GM10248 (cell line): ENCODE measurements at regions of chr2 and their contacts with region 1.

Region 1: DNA sequence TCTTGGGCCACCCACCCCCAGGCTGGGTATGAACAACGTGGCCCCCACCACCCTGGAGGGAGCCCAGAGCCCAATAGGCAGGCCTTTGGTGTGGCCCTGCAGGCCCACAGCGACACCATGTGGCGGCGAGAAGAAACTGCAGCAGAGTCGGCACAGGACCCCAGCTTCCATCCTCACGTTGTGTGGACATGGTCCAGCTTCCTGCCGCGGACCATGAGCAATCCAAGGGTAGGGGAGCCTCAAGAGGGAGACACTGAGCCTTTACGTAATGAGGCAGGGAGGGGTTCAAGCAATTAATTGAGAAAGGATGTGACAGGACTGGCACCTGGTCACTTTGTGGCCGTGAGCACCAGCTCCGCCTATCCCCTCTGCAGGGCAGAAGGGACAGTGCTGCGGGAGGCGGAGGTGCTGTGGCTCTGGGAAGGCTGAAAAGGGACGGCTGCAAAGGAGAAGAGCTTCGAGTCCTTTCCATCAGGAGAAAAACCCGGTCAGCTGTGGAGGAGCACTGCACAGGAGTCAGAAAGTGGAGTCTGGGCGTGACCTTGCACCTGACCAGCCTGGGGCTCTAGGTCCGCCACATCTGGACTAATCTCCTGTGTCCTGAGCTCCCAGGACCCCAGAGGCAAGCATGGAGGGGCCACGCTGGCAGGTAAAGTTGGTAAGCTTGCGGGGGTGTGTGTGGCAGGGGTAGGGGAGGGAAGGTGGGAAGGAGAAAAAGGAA is 44.8 kb downstream of the TMEM37 start:
- DNase-seq: peak; percentile 86
- CTCF ChIP-seq: peak; percentile 94

Region 2: DNA sequence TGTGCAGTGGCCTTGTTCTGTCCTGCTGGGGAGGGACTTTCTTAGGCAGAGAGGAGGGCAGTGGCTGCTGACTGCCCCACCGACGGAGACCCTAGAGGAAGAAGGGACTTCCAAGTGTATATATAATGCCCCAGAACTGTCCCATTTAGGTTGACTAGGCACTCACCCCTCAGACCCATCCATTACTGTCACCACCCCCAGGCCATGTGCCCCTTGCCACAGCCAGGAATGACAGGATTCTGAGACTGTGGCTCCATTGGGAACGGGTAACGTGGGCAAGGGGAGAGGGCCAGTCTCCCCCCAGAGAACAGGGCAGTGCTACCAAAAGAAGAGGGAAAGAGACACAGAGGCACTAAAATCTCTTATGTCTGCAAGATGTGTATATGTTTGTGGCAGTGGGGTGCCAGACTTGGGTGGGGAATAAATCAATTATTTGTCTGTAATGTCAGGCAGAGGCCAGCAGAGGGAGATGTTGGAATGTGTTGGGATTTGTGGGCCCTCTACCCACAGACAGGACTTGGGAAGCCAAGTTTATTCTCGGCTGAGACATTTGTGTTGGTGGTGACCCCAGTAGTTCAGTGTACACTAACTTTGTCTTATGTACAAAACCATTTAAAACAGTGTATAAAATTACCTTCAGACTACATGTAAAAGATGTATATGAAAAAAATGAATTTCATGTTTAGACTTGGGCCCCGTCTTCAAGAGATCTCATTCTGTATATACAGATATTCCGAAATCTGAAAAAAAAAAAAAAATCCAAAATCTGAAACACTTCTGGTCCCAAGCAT is 68.8 kb before region 1 on chr2:
- CTCF ChIA-PET with region 1: interaction called, 110 read pairs
- POLR2A ChIA-PET with region 1: no interaction called
- DNase-seq: peak; percentile 73
- CTCF ChIP-seq: peak; percentile 68

Region 3: DNA sequence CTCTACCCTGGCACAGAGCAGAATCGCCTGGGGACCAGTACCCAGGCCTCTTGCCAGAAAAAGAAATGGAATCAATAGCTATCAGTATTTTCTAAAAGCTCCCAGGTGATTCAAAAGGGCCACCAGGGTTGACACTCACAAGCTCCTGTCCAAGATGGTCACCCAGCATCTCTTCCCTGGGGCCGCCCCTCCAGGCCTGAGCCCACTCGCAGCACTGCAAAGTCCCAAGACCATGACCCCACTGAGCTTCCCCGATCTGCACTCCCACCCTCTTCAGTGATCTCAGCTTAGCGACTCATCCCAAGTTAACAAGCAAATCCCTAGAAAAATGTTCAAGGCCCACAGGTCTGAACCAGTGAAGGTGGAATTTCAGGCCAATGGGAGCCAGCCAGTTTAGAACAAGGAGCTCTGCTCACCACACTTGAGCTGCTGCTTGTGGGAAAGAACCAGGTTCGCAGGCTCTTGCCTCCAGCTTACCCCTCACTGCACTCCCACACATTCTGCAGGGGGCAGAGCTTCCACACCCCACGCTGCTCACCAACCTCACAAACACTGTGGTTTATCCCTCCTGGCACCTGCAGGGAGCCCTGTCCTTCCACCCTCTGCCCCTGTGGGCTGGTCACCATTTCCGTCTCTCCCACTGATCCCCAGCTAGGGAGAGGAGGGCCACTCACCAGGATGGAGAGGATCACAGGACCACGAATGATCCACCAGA is 25.0 kb before region 1 on chr2:
- CTCF ChIA-PET with region 1: interaction called, 23 read pairs
- POLR2A ChIA-PET with region 1: no interaction called
- DNase-seq: no peak
- CTCF ChIP-seq: no peak

Region 4: GRCh38 chr2:119459841-119460475 is 16.5 kb before region 1 on chr2:
- CTCF ChIA-PET with region 1: interaction called, 37 read pairs
- POLR2A ChIA-PET with region 1: no interaction called
- DNase-seq: no peak
- CTCF ChIP-seq: no peak

Region 5: DNA sequence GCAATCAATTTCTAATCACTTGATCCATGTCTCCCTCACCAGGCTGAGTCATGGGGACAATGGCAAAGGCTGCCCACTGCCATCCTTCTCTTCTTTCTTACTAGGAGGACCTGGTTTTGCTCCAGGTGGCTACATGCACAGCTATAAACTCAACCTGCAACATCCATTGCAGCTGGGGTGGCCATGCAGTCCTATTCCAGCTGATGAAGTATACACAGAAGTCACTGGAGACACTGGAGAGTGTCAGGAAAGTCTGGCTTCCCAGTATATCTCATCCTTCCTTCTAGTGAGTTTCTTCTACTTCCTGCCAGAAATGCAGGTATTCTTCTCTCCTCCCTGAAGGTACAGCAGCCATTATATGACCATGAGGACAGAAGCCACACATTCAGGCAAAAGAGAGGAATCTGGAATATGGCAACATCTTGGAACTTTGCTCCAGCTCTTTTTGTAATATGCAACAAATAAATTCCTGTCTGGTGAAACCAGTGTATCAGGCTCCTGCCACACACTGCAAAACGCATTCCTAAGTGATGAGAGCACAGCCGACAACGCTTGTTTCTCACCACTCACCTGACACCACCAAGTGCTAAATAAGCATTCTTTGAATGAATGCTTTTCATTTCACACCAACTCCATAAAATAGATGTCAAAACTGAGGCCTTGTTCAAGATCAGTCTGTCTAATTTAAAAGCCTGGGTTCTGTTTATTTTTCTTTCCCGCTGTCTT is 15.5 kb after region 1 on chr2:
- CTCF ChIA-PET with region 1: interaction called, 78 read pairs
- POLR2A ChIA-PET with region 1: no interaction called
- DNase-seq: no peak
- CTCF ChIP-seq: no peak